HepG2 (cell line): ENCODE measurements at regions of chr15 and their contacts with region 1.

Region 1: GRCh38 chr15:99264125-99264524 is 12.8 kb downstream of the LRRC28 start:
- DNase-seq: no peak
- ATAC-seq: no peak
- H3K4me3 ChIP-seq: no peak overlapping the region
- H3K27ac ChIP-seq: no peak overlapping the region
- H3K4me1 ChIP-seq: peaks cover 41% of the 10 kb centered on the region
- H3K27me3 ChIP-seq: no peaks in the 10 kb centered on the region
- CTCF ChIP-seq: no peak
- EP300 ChIP-seq: no peak
- POLR2A ChIP-seq: no peak
- RAD21 ChIP-seq: no peak

Region 2: GRCh38 chr15:99282121-99282520 is 18.0 kb after region 1 on chr15:
- CTCF ChIA-PET with region 1: no interaction called
- POLR2A ChIA-PET with region 1: no interaction called
- in situ Hi-C with region 1: no loop called
- intact Hi-C with region 1: no loop called
- DNase-seq: no peak
- ATAC-seq: no peak
- H3K4me3 ChIP-seq: no peak overlapping the region
- H3K27ac ChIP-seq: no peak overlapping the region
- H3K4me1 ChIP-seq: peaks cover 7% of the 10 kb centered on the region; the same call in 1 of the 2 replicates
- H3K27me3 ChIP-seq: no peaks in the 10 kb centered on the region
- CTCF ChIP-seq: no peak
- EP300 ChIP-seq: no peak
- POLR2A ChIP-seq: no peak
- RAD21 ChIP-seq: no peak

Region 3: GRCh38 chr15:99719096-99719541 is 455.0 kb after region 1 on chr15:
- CTCF ChIA-PET with region 1: no interaction called
- POLR2A ChIA-PET with region 1: no interaction called
- in situ Hi-C with region 1: loop called (anchors 5 kb)
- intact Hi-C with region 1: no loop called
- DNase-seq: no peak
- ATAC-seq: no peak
- H3K4me3 ChIP-seq: no peak overlapping the region
- H3K27ac ChIP-seq: no peak overlapping the region
- H3K4me1 ChIP-seq: peaks cover 15% of the 10 kb centered on the region
- H3K27me3 ChIP-seq: no peaks in the 10 kb centered on the region
- CTCF ChIP-seq: no peak
- EP300 ChIP-seq: no peak
- POLR2A ChIP-seq: no peak
- RAD21 ChIP-seq: no peak